ENCODE measurements at regions of chr13 and their contacts with region 1.

Region 1: DNA sequence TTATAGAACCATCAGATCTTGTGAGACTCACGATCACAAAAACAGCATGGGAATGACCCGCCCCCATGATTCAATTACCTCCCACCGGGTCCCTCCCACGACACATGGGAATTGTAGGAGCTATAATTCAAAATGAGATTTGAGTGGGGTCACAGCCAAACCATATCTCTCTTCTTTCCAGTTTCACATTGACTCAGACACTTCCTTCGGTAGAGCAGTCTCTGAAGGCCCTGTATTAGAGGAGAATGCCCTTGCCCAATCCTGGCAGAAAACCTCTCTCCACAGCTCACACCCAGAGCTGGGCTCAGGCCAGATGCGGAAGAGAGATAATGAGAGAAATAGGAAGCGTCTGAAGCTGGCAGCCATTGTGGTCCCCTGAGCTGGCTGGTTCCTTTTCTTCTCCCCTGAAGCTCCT is 72.4 kb upstream of the CLDN10 start:
- DNase-seq: peak in 2 of 5 donors; percentile 35 to 60
- ATAC-seq: peak in 3 of 4 donors; percentile 21 to 51 (median 30)
- H3K4me3 ChIP-seq: no peak overlapping the region
- H3K27ac ChIP-seq: peak overlapping the region in 1 of 12 donors; percentile 19
- H3K4me1 ChIP-seq: peaks cover 0 to 11% (median 0%) of the 10 kb centered on the region in 12 donors
- H3K27me3 ChIP-seq: peaks cover 0 to 2% (median 0%) of the 10 kb centered on the region in 9 donors
- CTCF ChIP-seq: no peak
- POLR2A ChIP-seq: no peak

Region 2: DNA sequence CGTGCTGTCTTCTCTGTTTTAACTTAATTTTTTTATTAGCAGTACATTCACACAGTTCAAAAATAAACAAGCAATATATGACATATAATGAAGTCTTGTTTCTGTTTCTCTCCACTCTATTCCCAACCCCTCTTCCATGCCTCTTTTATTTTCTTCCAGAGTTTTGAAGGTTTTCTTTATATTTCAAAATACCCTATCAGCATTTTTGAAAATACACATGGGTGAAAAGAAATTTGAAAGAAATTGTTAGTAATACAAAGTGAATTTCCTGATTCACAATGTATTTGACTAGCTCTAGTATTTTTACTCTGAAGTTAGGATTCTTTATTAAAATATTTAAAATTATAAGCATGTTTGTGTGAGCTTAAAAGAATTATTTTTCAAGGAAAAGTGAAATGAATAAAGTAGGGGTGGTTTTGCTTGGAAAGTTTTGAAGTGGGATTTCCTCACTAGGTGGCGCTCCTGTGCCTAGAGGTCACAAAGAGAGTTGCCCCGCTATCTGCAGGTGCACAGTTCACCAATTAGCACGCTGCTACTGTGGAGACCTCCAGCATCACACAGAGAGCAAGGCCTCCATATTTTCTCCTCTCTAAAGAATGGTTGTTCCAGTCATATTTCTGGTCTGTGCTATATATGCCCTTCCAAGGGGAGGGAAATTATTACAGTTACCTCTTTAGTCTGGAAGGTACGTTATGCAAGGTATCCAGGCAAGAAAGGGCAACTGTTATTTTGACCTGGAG is 805.4 kb before region 1 on chr13:
- intact Hi-C with region 1: loop called in 1 of 10 experiments (anchors 10 kb)
- DNase-seq: peak in 3 of 5 donors; percentile 9 to 27 (median 22)
- ATAC-seq: no peak
- H3K4me3 ChIP-seq: no peak overlapping the region
- H3K27ac ChIP-seq: no peak overlapping the region
- H3K4me1 ChIP-seq: no peaks in the 10 kb centered on the region
- H3K27me3 ChIP-seq: peaks cover 0 to 29% (median 0%) of the 10 kb centered on the region in 9 donors
- CTCF ChIP-seq: peak; percentile 36 to 68 (median 58)
- POLR2A ChIP-seq: no peak

Region 3: DNA sequence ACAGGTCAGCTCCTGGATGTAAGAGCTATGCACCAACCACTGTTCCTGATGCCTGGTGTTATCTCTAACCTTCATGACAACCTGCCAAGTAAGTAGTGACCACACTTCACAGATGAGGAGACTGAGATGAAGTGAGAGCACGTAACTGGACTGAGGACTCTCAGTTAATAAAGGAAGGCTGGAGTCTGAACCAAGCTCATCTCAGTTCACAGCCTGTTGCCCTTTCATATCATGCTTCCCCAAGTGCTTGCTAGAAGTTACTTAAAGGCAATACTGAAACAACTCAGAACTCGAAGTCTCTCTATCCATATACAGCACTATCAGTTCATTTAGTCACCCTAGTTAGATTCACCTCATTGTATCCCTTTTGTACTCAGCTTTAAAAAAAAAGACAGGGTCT is 298.6 kb before region 1 on chr13:
- intact Hi-C with region 1: loop called in 4 of 10 experiments (anchors 5 to 10 kb)
- DNase-seq: no peak
- ATAC-seq: no peak
- H3K4me3 ChIP-seq: no peak overlapping the region
- H3K27ac ChIP-seq: no peak overlapping the region
- H3K4me1 ChIP-seq: peaks cover 0 to 18% (median 8%) of the 10 kb centered on the region in 12 donors
- H3K27me3 ChIP-seq: no peaks in the 10 kb centered on the region
- CTCF ChIP-seq: no peak
- POLR2A ChIP-seq: no peak

Region 4: DNA sequence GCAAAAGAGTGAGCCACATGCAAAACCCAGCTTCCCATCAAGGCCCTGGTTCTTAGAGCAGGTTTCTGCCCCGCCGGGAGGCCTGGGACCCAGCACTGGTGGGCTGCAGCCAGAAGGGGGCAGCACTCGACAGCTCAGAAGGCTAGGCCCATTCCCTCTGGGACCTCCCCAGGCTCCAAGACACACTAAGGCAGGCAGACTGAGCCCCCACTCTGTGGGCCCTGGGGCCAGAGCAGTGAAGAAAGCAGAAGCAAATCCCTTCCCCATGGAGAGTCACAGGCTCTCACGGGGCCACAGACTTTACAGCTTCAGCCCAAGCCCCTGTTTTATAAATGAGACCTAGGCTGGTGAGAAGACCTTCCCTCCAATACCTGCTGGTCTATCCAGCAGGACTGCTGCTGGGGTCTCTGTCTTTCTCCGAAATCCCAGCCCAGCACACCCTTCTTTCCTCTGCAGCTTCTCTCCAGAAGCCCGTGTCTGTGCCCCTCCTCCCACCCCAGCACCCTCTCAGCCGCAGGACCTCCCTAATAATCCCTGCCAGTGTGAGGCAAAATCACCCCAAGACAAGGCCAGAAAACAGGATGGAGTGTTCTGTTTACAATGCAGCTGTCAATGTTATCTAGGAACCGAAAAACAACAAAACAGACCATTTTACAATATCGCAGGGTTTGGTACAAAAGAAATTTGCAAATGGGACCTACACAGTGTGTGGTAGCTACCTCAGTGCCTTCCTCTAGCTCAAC is 288.1 kb before region 1 on chr13:
- intact Hi-C with region 1: loop called in 9 of 10 experiments (anchors 2 to 10 kb)
- DNase-seq: peak; percentile 72 to 89 (median 76)
- ATAC-seq: peak; percentile 81 to 96 (median 92)
- H3K4me3 ChIP-seq: no peak overlapping the region
- H3K27ac ChIP-seq: no peak overlapping the region
- H3K4me1 ChIP-seq: peaks cover 0 to 2% (median 0%) of the 10 kb centered on the region in 12 donors
- H3K27me3 ChIP-seq: no peaks in the 10 kb centered on the region
- CTCF ChIP-seq: peak; percentile 77 to 90 (median 86)
- POLR2A ChIP-seq: no peak

Region 5: DNA sequence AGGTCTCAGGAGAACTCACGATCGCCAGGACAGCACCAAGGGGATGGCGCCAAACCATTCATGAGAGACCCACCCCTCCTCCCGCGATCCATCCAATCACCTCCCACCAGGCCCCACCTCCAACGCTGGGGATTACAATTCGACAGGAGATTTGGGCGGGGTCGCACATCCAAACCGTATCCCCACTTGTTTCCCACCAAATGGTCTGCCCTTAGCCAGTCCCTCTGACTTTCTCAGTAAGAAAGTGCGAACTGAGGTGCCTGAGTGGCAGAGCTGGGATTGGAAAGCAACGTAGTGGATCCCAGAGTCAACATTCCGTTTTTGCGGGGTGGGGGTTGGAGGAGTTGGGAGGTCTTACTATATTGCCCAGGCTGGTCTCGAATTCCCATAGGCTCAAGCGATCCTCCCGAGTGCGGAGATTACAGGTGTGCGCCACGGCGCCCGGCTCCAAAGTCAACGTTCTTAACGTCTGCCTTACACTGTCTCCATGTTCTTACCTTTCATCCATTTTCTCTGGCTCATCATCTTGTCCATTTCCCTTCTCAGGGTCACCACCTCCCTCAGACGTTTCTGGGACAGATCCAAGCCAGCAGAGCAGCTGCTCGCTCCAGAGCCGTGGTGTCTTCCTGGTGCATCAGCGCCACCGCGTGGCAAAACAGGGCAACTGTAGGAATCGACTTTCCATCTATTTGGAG is 76.2 kb before region 1 on chr13:
- intact Hi-C with region 1: loop called in 3 of 10 experiments (anchors 5 kb)
- DNase-seq: peak; percentile 81 to 90 (median 82)
- ATAC-seq: peak; percentile 72 to 96 (median 94)
- H3K4me3 ChIP-seq: peak overlapping the region in 10 of 12 donors; percentile 25 to 54 (median 44)
- H3K27ac ChIP-seq: no peak overlapping the region
- H3K4me1 ChIP-seq: peaks cover 0 to 8% (median 5%) of the 10 kb centered on the region in 12 donors
- H3K27me3 ChIP-seq: peaks cover 0 to 4% (median 0%) of the 10 kb centered on the region in 9 donors
- CTCF ChIP-seq: peak; percentile 89 to 97 (median 93)
- POLR2A ChIP-seq: no peak

Region 6: GRCh38 chr13:95614641-95615245 is 134.6 kb after region 1 on chr13:
- intact Hi-C with region 1: no loop called
- DNase-seq: no peak
- ATAC-seq: no peak
- H3K4me3 ChIP-seq: no peak overlapping the region
- H3K27ac ChIP-seq: no peak overlapping the region
- H3K4me1 ChIP-seq: no peaks in the 10 kb centered on the region
- H3K27me3 ChIP-seq: no peaks in the 10 kb centered on the region
- CTCF ChIP-seq: no peak
- POLR2A ChIP-seq: no peak